CD8-positive, alpha-beta T cell (primary cell): ENCODE measurements at regions of chr17 and their contacts with region 1.

Region 1: DNA sequence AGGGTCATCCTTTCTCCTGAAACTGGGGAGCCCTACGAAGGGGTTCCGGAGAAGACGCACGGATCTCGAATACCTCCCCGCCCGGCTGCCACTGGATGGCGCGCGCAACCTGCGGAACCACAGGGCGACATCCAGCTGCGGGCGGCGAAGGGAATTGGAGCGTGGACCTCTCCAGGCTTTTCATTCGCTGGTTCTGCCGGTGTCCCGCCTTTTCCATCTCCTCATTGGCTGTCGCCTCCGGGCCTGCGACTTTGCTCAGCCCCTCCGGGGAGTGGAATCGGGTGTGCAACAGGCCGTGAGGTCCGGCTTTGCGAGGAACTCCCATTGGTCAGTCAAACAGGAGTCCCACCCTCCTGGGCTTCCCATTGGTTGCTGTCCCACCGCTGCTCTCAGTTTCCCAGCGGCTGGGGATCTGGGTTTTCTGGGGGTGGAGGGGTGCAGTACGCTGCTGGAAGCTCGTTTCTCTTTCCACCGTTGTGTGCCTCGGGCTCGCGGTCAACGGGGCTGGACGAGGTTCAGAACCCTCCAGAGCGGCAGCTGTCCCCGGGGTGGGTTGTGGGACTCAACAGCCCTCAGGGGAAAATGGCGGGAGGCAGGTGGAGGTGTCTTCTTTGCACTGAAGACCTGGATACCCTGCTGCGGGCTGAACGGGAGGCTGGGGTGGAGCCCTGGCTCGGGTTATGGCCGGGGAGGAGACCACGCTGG is 14.5 kb downstream of the OR1D5 start:
- DNase-seq: peak; percentile 81 to 97 (median 90)
- ATAC-seq: peak; percentile 96
- H3K4me3 ChIP-seq: peak overlapping the region; percentile 67 to 91
- H3K4me3 Mint-ChIP-seq: peak overlapping the region; percentile 87
- H3K27ac ChIP-seq: peak overlapping the region; percentile 27 to 45
- H3K27ac Mint-ChIP-seq: peak overlapping the region; percentile 55
- H3K4me1 ChIP-seq: no peaks in the 10 kb centered on the region
- H3K4me1 Mint-ChIP-seq: peaks cover 6% of the 10 kb centered on the region
- H3K27me3 ChIP-seq: no peaks in the 10 kb centered on the region
- H3K27me3 Mint-ChIP-seq: no peaks in the 10 kb centered on the region
- CTCF ChIP-seq: peak; percentile 56

Region 2: DNA sequence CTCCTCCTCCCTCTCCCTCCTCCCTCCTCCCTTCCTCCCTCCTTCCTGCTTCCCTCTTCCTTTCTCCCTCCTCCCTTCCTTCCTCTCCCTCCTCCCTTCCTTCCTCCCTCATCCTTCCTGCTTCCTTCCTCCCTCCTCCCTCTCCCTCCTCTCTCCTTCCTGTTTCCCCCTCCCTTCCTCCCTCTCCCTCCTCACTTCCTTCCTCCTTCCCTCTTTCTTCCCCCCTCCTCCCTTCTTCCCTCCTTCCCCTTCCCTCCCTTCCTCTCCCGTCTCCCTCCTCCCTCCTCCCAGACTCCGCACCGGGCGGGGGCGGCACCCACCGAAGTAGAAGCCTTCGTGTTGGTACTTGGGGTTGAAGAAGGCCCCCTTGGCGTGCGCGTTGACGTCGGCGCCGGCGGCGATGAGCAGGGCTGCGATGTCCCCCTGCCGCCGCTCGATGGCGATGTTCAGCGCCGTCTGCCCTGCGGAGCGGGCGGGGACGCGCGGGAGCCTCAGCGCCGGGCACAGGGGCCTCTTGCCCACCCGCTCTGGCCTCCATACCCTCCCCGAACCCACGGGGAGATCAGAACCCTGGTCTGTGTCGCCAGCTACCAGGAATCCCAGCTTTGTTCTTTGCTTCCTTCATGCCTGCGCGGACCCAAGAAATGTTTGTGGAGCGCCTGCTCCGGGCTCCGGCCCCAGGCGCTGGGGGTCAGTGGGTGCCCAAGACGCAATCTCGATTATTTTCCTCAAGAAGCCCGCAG is 486.5 kb after region 1 on chr17:
- CTCF ChIA-PET with region 1: no interaction called
- POLR2A ChIA-PET with region 1: no interaction called
- intact Hi-C with region 1: loop called in 1 of 2 experiments (anchors 10 kb)
- DNase-seq: peak; percentile 31 to 82 (median 52)
- ATAC-seq: peak; percentile 95
- H3K4me3 ChIP-seq: peak overlapping the region; percentile 39 to 42
- H3K4me3 Mint-ChIP-seq: peak overlapping the region; percentile 56
- H3K27ac ChIP-seq: peak overlapping the region in 1 of 2 experiments; percentile 60
- H3K27ac Mint-ChIP-seq: no peak overlapping the region
- H3K4me1 ChIP-seq: no peaks in the 10 kb centered on the region
- H3K4me1 Mint-ChIP-seq: peaks cover 9% of the 10 kb centered on the region
- H3K27me3 ChIP-seq: no peaks in the 10 kb centered on the region
- H3K27me3 Mint-ChIP-seq: peaks cover 9% of the 10 kb centered on the region
- CTCF ChIP-seq: peak; percentile 59

Region 3: GRCh38 chr17:3636154-3636907 is 587.4 kb after region 1 on chr17 and contains the starts of genes CTNS and SHPK:
- CTCF ChIA-PET with region 1: interaction called, 4 read pairs
- POLR2A ChIA-PET with region 1: no interaction called
- intact Hi-C with region 1: loop called in 1 of 2 experiments (anchors 5 kb)
- DNase-seq: peak; percentile 86 to 96 (median 94)
- ATAC-seq: peak; percentile 98
- H3K4me3 ChIP-seq: peak within 1 kb of the TSS; percentile 93 to 94
- H3K4me3 Mint-ChIP-seq: peak within 1 kb of the TSS; percentile 97
- H3K27ac ChIP-seq: peak within 1 kb of the TSS; percentile 90 to 99
- H3K27ac Mint-ChIP-seq: peak within 1 kb of the TSS; percentile 99
- H3K4me1 ChIP-seq: peaks cover 8% of the 10 kb centered on the region
- H3K4me1 Mint-ChIP-seq: peaks cover 26% of the 10 kb centered on the region
- H3K27me3 ChIP-seq: no peaks in the 10 kb centered on the region
- H3K27me3 Mint-ChIP-seq: no peaks in the 10 kb centered on the region
- CTCF ChIP-seq: no peak
- total RNA-seq, gene CTNS: 3.1 to 4.2 TPM
- total RNA-seq, gene SHPK: 2.4 to 3.0 TPM